ENCODE measurements at regions of chr19 and their contacts with region 1.

Region 1: GRCh38 chr19:23395041-23395721 is at the start of gene ZNF91:
- DNase-seq: peak; percentile 76
- ATAC-seq: peak; percentile 96
- H3K4me3 Mint-ChIP-seq: peak within 1 kb of the TSS; percentile 99
- H3K27ac Mint-ChIP-seq: peak within 1 kb of the TSS; percentile 98
- H3K4me1 Mint-ChIP-seq: peaks cover 40% of the 10 kb centered on the region
- H3K27me3 Mint-ChIP-seq: no peaks in the 10 kb centered on the region
- CTCF ChIP-seq: no peak
- total RNA-seq, gene ZNF91: 56.4 and 70.9 TPM in 2 replicates

Region 2: DNA sequence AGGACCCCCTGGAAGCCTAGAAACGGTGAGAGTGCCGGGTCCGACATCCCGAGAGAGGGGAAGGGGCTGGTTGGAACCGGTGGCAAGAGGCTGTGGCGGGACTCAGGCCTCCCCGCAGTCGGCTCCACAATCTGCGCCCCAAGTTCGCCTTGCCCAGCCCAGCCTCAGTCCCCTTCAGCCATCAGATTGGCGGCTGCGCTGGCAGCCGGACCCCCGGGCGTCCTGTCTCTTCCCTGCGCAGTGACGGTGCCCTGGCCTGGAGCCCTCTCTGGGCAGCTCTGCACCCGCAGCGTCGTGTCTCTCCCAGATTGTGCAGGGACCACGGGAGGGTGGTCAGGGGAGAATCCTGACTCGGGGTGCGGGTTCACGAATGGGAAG is 760.7 kb before region 1 on chr19:
- CTCF ChIA-PET with region 1: no interaction called
- POLR2A ChIA-PET with region 1: interaction called, 4 read pairs
- intact Hi-C with region 1: loop called (anchors 10 kb)
- DNase-seq: no peak
- ATAC-seq: peak; percentile 12
- H3K4me3 Mint-ChIP-seq: peak overlapping the region; percentile 93
- H3K27ac Mint-ChIP-seq: peak overlapping the region; percentile 70
- H3K4me1 Mint-ChIP-seq: peaks cover 9% of the 10 kb centered on the region
- H3K27me3 Mint-ChIP-seq: no peaks in the 10 kb centered on the region
- CTCF ChIP-seq: no peak

Region 3: DNA sequence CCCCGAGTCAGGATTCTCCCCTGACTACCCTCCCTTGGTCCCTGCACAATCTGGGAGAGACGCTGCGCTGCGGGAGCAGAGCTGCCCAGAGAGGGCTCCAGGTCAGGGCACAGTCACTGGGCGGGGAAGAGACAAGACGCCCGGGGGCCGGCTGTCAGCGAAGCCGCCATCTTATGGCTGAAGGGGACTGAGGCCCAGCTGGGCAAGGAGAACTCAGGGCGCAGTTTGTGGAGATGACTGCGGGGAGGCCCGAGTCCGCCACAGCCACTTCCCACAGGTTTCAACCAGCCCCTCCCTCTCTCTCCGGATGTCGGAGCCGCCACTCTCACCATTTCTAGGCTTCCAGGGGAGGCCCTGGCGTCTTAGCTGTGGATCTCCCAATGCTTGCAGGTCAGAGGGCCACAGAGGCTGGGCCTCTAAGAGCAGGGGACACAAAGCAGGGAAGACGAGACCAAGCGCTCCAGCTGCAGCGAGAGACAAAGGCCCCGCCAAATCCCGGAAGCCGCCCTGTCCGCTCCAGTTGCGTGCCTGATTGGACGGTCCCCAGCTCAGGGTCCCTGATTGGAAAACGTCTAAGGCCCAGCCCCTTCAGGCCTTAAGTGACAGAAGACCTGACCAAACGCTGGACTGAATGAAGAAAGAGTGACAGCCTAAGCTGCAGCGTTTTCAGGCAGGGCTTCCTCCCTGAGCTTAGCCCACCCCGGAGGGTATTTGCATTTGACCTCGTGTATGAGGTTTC is 145.1 kb before region 1 on chr19 and contains the start of gene ZNF724:
- CTCF ChIA-PET with region 1: no interaction called
- POLR2A ChIA-PET with region 1: interaction called, 8 read pairs
- intact Hi-C with region 1: loop called (anchors 1 kb)
- DNase-seq: peak; percentile 77
- ATAC-seq: peak; percentile 100
- H3K4me3 Mint-ChIP-seq: peak within 1 kb of the TSS; percentile 98
- H3K27ac Mint-ChIP-seq: peak within 1 kb of the TSS; percentile 88
- H3K4me1 Mint-ChIP-seq: peaks cover 10% of the 10 kb centered on the region
- H3K27me3 Mint-ChIP-seq: no peaks in the 10 kb centered on the region
- CTCF ChIP-seq: no peak
- total RNA-seq, gene ZNF724: 4.5 and 8.0 TPM in 2 replicates

Region 4: DNA sequence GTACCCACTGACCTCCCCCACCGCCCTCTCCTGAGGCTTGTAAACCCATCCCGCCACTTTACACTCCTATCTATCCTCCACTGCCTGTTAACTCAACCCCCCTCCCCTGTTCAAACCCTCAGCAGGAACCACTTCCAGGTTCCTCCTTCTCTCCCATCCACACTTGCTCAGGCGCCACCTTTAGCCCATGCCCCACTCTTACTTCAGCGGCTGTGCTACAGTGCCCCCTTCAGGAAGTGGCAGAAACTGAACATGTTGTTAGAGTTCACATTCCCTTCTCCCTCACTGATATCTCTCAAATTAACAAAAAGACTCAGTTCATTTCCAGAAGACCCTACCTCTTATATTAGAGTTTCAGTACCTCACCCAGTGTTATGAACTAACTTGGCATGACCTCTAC is 49.3 kb before region 1 on chr19:
- CTCF ChIA-PET with region 1: no interaction called
- POLR2A ChIA-PET with region 1: no interaction called
- intact Hi-C with region 1: loop called (anchors 10 kb)
- DNase-seq: no peak
- ATAC-seq: no peak
- H3K4me3 Mint-ChIP-seq: no peak overlapping the region
- H3K27ac Mint-ChIP-seq: no peak overlapping the region
- H3K4me1 Mint-ChIP-seq: no peaks in the 10 kb centered on the region
- H3K27me3 Mint-ChIP-seq: no peaks in the 10 kb centered on the region
- CTCF ChIP-seq: no peak

Region 5: GRCh38 chr19:23460641-23461040 is 65.5 kb after region 1 on chr19:
- CTCF ChIA-PET with region 1: no interaction called
- POLR2A ChIA-PET with region 1: no interaction called
- intact Hi-C with region 1: no loop called
- DNase-seq: no peak
- ATAC-seq: no peak
- H3K4me3 Mint-ChIP-seq: no peak overlapping the region
- H3K27ac Mint-ChIP-seq: no peak overlapping the region
- H3K4me1 Mint-ChIP-seq: no peaks in the 10 kb centered on the region
- H3K27me3 Mint-ChIP-seq: no peaks in the 10 kb centered on the region
- CTCF ChIP-seq: no peak

Region 6: DNA sequence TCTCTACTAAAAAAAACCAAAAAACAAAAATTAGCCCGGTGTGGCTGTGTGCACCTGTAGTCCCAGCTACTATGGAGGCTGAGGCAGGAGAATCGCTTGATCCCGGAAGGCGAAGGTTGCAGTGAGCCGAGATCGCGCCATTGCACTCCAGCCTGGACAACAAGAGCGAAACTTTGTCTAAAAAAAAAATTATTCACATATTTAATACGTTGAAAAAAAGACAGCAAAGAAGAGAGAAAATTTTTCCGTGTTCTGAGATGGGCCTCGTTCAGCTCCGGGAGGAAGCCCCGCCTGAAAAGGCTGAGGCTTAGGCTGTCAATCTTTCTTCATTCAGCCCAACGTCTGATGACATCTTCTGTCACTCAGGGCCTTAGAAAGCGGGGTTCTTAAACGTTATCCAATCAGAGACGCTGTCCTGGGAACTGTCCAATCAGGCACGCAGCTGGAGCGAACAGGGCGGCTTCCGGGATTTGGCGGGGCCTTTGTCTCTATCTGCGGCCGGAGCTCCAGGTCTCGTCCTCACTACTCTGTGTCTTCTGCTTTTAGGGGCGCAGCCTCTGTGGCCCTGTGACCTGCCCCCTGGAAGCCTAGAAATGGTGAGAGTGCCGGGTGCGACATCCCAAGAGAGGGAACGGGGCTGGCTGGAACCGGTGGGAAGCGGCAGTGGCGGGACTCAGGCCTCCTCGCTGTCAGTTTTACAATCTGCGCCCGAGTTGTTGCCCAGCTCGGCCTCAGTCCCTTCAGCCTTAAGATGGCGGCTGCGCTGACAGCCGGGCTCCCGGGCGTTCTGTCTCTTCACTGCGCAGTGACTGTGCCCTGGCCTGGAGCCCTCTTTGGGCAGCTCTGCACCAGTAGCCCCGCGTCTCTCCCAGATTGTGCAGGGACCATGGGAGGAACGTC is 519.5 kb after region 1 on chr19 and contains the start of gene ZNF726:
- CTCF ChIA-PET with region 1: no interaction called
- POLR2A ChIA-PET with region 1: interaction called, 14 read pairs
- intact Hi-C with region 1: loop called (anchors 10 kb)
- DNase-seq: peak; percentile 67
- ATAC-seq: peak; percentile 97
- H3K4me3 Mint-ChIP-seq: peak within 1 kb of the TSS; percentile 96
- H3K27ac Mint-ChIP-seq: peak within 1 kb of the TSS; percentile 83
- H3K4me1 Mint-ChIP-seq: peaks cover 10% of the 10 kb centered on the region
- H3K27me3 Mint-ChIP-seq: no peaks in the 10 kb centered on the region
- CTCF ChIP-seq: no peak
- total RNA-seq, gene ZNF726: 8.2 and 9.4 TPM in 2 replicates

Region 7: DNA sequence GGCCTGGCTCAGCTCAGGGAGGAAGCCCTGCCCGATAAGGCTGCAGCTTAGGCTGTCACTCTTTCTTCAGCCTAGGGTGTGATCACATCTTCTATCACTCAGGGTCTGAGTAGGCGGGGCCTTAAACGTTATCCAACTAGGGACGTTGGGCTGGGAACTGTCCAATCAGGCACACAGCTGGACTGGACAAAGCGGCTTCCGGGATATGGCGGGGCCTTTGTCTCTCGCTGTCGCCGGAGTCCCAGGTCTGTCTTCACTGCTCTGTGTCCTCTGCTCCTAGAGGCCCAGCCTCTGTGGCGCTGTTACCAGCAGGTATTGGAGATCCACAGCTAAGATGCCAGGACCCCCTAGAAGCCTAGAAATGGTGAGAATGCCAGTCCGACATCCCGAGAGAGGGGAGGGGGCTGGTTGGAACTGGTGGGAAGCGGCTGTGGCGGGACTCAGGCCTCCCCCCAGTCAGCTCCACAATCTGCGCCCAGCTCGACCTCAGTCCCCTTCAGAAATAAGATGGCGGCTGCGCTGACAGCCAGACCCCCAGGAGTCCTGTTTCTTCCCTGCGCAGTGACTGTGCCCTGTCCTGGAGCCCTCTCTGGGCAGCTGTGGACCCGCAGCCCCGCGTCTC is 691.9 kb after region 1 on chr19 and contains the start of gene ZNF254:
- CTCF ChIA-PET with region 1: no interaction called
- POLR2A ChIA-PET with region 1: interaction called, 14 read pairs
- intact Hi-C with region 1: loop called (anchors 5 kb)
- DNase-seq: peak; percentile 67
- ATAC-seq: peak; percentile 99
- H3K4me3 Mint-ChIP-seq: peak within 1 kb of the TSS; percentile 98
- H3K27ac Mint-ChIP-seq: peak within 1 kb of the TSS; percentile 97
- H3K4me1 Mint-ChIP-seq: peaks cover 10% of the 10 kb centered on the region
- H3K27me3 Mint-ChIP-seq: no peaks in the 10 kb centered on the region
- CTCF ChIP-seq: no peak
- total RNA-seq, gene ZNF254: 21.5 and 28.8 TPM in 2 replicates